HCT116 (cell line): ENCODE measurements at regions of chr1 and their contacts with region 1.

Region 1: GRCh38 chr1:26156704-26157038 is 2.2 kb upstream of the FAM110D start:
- DNase-seq: no peak
- ATAC-seq: peak; percentile 71
- H3K4me3 ChIP-seq: peak overlapping the region in 1 of 2 experiments; percentile 33; a peak in 2 of 4 replicates
- H3K27ac ChIP-seq: peak overlapping the region; percentile 30; the same call in 1 of the 2 replicates
- H3K4me1 ChIP-seq: peaks cover 13 to 36% of the 10 kb centered on the region in 2 experiments
- H3K27me3 ChIP-seq: no peaks in the 10 kb centered on the region
- CTCF ChIP-seq: no peak
- POLR2A ChIP-seq: no peak
- RAD21 ChIP-seq: no peak

Region 2: GRCh38 chr1:26169669-26170471 is 13.2 kb after region 1 on chr1 and contains the start of gene ZNF593:
- CTCF ChIA-PET with region 1: interaction called, 15 read pairs
- POLR2A ChIA-PET with region 1: interaction called, 6 read pairs
- RAD21 ChIA-PET with region 1: no interaction called
- intact Hi-C with region 1: no loop called
- DNase-seq: peak; percentile 86
- ATAC-seq: peak; percentile 92
- H3K4me3 ChIP-seq: peak within 1 kb of the TSS; percentile 89 to 96
- H3K27ac ChIP-seq: peak within 1 kb of the TSS; percentile 74
- H3K4me1 ChIP-seq: peaks cover 4 to 22% of the 10 kb centered on the region in 2 experiments; a peak in 3 of 4 replicates
- H3K27me3 ChIP-seq: no peaks in the 10 kb centered on the region
- CTCF ChIP-seq: peak; percentile 80 to 84 (median 81)
- POLR2A ChIP-seq: no peak
- RAD21 ChIP-seq: peak; percentile 59
- total RNA-seq, gene ZNF593: 62.4 TPM